ENCODE measurements at regions of chr6 and their contacts with region 1.

Region 1: DNA sequence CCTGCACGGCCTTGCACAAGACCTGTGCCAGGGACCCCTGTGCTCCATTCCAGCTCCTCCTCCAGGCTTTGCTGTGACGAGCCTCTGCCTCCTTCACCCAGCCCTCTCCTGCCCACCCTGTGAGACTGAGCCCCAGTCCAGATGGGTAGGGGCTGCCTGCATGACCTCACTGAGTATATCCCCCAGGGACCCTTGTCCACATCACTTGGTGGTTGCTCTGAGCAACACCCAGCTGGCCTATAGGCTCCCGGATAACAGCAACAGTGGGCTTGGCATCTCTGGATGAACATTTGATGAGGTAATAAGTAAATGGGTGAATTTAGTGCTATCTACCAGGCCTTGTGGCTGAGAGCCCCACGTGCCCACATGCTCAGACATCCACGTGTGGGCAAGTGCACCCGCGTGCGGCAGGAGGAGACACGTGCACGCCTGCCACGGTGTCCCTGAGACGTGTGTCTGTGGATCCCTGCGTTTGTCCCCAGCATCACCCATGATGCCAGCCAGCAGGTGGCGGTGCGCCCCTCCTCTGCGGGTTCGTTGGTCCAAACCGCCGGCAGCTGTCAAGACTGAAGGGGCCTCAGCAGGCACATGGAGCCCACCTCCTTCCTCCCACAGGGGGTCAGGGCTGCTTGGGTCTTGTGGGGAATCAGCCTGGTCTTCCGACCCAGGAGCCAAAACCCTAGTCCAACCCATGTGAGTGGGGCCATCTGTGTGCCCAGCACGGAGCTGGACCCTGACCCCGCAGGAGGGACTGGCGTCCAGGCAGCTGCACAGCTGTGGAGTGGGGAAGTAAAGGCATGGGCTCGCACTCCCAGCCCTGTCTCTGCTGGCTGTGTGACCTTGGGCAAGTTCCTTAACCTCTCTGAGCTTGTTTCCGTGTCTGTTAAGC is 45.9 kb downstream of the FGD2 start:
- DNase-seq: peak; percentile 96
- H3K4me3 Mint-ChIP-seq: peak overlapping the region; percentile 88
- H3K27ac Mint-ChIP-seq: peak overlapping the region; percentile 98
- H3K4me1 Mint-ChIP-seq: peaks cover 57% of the 10 kb centered on the region
- H3K27me3 Mint-ChIP-seq: no peaks in the 10 kb centered on the region

Region 2: DNA sequence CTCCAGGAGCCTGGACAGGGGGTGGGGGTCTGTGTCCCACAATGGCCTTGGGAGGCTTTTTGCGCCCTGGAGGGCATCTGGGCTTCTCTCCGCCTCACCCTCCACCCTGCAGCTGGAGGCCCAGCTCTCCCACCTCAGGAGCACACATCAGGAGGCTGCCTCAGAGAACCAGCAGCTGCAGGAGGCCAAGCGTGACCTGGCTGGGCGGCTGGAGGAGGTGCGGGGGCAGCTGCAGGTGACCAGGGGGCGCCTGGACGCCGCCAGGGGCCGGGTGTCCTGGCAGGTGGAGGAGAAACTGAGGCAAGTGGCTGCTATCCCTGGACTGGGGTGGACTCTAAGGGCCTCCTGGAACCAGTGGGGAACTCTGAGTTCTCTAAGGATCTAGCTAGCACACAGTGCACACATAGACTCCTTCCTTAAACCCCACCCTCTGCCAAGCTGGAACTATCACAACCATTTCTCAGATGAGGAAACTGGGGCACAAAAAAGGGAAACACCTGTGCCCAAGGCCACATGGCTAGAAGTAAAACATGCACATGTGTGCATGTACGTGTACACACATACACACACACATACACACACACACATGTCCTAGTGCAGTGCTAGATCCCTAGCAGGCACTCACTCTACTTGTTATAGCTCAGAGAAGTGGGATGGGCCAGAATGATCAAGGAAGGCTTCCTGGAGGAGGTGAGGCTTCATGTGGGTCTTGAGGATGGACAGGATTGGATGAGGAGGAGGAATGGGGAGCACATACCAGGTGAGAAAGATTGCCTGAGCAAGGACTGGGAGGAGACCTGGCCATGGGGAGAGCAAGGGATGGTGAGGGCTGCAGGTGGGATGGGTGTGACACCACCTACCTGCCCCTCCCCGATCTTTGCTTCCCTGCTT is 330.9 kb before region 1 on chr6:
- intact Hi-C with region 1: no loop called
- DNase-seq: no peak
- H3K4me3 Mint-ChIP-seq: no peak overlapping the region
- H3K27ac Mint-ChIP-seq: peak overlapping the region; percentile 32
- H3K4me1 Mint-ChIP-seq: peaks cover 8% of the 10 kb centered on the region
- H3K27me3 Mint-ChIP-seq: no peaks in the 10 kb centered on the region

Region 3: GRCh38 chr6:37029249-37029971 is 22.0 kb before region 1 on chr6:
- intact Hi-C with region 1: loop called (anchors 1 kb)
- DNase-seq: peak; percentile 84
- H3K4me3 Mint-ChIP-seq: peak overlapping the region; percentile 39
- H3K27ac Mint-ChIP-seq: peak overlapping the region; percentile 70
- H3K4me1 Mint-ChIP-seq: peaks cover 58% of the 10 kb centered on the region
- H3K27me3 Mint-ChIP-seq: no peaks in the 10 kb centered on the region

Region 4: DNA sequence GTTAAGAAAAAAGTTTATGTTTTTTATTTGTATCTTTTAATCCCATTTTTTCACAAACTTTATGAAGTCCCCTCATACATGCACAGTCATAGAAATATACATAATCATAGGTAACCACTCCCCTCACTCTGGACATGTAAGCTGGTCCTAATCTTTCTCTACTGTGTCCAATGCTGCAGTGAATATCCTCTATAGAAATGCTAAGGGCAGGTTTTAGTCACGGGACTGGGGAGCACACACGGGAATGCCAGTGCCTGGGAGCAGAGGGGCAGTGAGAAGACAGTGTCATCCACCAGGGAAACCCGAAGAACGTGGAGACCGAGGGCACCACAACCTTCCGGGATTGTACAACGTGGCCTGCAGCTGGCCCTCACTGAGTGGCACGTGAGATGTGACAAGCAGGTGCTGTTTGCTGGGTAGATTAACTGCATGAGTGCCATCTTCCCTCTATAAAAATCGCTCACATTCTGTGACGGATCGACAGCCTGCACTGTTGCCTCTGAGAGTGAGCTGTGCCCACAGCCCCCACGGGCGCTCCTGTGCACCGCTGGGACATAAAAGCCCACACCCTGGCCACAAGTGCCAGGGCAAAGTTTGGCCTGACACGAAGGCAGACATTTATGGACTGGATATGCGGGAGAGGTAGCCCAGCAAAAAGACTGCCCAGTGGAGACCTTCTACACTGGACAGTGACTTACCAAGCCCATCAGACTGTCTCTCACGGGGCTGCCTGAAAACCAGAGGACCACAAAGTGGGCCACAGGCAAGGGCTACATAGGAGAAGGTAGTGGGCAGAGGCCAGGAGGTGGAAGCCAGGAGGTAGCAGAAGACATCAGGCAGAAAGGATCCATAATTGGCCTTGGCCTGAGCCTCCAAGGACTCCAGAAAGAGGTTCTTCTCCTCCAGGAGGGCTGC is 17.2 kb after region 1 on chr6:
- intact Hi-C with region 1: no loop called
- DNase-seq: no peak
- H3K4me3 Mint-ChIP-seq: no peak overlapping the region
- H3K27ac Mint-ChIP-seq: no peak overlapping the region
- H3K4me1 Mint-ChIP-seq: peaks cover 25% of the 10 kb centered on the region
- H3K27me3 Mint-ChIP-seq: no peaks in the 10 kb centered on the region

Region 5: DNA sequence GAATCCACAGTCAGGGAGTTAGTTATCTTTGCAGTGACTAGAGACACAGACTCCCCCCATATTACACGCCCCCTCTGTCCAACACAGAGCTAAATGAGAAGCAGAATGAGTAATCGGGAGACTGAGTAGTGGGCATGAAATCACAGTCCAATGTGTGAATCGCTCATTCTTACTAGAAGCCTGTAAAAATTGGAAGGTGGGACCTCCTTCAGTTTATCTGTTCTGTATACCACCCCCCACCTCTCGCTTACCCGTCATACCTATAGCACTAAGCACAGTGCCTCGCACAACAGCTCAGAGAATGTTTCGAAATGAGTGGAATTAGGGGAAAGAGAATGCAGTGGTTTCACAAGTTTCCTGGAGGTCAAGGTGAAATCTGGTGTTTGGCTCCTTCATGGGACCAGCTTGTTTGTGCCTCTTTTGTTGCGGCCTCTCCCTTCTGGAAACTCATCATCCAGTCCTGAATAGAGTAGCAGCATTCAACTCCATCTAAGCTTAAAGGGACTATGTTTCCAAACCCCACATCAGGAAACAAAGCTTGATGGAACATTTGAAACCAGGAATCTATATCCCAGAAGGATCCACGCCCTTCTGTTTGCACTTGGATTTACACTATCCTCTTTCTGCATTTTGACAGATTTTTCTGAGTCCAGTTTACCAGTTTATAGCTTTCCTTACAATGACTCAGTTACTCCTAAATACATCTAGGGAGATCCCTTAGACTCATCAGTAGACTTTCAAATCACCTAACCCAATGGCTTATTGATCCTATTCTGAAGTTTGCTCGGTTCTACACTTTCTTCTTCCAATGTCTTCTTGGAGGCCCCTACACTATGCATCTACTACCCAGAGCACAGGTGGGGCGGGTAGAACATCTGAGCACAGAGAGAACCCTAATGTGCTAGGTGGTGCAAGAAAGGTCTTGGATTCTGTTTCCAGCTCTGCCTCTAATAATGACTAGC is 59.4 kb after region 1 on chr6:
- intact Hi-C with region 1: loop called (anchors 2 kb)
- DNase-seq: peak; percentile 69
- H3K4me3 Mint-ChIP-seq: no peak overlapping the region
- H3K27ac Mint-ChIP-seq: peak overlapping the region; percentile 76
- H3K4me1 Mint-ChIP-seq: peaks cover 13% of the 10 kb centered on the region
- H3K27me3 Mint-ChIP-seq: peaks cover 2% of the 10 kb centered on the region

Region 6: DNA sequence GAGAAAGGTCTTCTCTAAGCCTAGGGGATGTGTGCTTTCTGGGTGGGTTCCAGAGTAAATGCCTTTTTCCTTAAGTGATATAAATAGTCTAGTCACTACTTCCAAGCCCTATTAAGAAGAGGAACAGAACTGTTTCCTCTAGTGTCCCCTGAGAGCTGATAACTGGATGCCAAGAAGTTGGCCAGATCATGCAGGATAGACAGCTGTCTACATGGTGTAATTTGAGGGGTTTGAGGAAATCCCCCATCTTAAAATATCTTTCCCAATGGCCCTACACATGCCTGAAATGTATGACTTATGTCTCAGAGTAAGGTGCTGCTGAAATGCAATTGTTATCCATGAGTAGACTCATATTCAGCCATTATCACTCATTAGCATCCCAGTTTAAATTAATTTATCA is 98.4 kb after region 1 on chr6:
- intact Hi-C with region 1: no loop called
- DNase-seq: no peak
- H3K4me3 Mint-ChIP-seq: no peak overlapping the region
- H3K27ac Mint-ChIP-seq: peak overlapping the region; percentile 56
- H3K4me1 Mint-ChIP-seq: peaks cover 8% of the 10 kb centered on the region
- H3K27me3 Mint-ChIP-seq: peaks cover 4% of the 10 kb centered on the region